ENCODE measurements at regions of chr6 and their contacts with region 1.

Region 1: GRCh38 chr6:133568970-133569889 is 319.7 kb upstream of the TCF21 start:
- DNase-seq: peak; percentile 26 to 55
- ATAC-seq: peak; percentile 94 to 97
- H3K4me3 ChIP-seq: peak overlapping the region; percentile 45 to 58 (median 52)
- H3K27ac ChIP-seq: peak overlapping the region; percentile 51 to 78 (median 72)
- H3K4me1 ChIP-seq: peaks cover 0 to 8% of the 10 kb centered on the region in 2 donors
- H3K27me3 ChIP-seq: no peaks in the 10 kb centered on the region
- CTCF ChIP-seq: peak; percentile 83 to 98 (median 93)
- POLR2A ChIP-seq: no peak

Region 2: DNA sequence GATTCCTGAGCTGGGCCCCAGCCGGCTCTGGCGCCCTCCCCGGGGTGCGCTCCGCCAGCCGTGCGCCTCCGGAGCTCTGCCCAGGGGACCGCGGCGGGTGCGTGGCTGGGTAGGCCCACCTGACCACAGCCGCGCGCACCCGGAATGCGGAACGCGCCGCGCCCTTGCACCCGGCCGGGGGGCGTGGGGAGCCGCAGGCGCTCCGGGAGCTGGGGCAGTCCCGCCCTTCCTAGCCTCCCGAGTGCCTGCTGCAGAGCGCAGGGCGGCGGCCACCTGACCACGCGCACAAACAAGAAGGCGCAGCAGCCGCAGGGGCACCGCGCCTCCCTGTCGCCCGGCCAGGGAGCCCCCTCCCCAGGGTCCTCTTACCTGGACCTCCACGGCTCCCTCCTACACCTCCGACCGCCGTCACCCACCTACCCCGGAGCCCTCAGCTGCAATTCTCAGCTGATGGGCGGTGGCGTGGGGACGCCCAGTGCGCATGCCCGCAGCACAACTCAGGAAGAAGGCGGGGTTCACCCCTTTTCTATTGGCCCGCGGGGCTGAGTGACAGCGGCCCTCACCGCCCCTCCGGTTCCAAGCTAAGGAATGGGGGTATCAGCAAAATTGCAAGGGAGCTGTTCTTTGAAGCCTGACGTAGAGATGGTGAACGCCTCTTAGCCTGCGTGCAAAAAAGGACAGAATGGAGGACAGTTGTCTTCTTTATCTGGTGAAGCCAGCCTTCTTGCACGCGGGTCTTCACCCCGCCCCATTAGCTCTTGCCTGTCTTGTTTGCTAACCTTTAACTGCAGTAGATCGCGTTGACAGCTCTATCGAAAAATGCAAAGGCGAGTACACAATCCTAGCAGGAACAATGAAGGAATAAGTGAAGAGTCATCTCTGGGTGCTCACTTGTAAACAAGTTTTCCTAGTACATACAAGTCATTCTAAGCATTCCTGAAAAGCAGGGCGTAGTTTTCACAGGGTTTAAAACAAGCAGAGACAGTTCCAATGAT is 1056.3 kb before region 1 on chr6 and contains the start of gene STX7:
- in situ Hi-C with region 1: loop called in 1 of 4 experiments (anchors 25 kb)
- intact Hi-C with region 1: loop called (anchors 10 kb)
- DNase-seq: peak; percentile 78 to 83
- ATAC-seq: peak; percentile 96
- H3K4me3 ChIP-seq: peak within 1 kb of the TSS; percentile 77 to 98 (median 88)
- H3K27ac ChIP-seq: peak within 1 kb of the TSS; percentile 85 to 96 (median 91)
- H3K4me1 ChIP-seq: peaks cover 15 to 21% of the 10 kb centered on the region in 2 donors
- H3K27me3 ChIP-seq: no peaks in the 10 kb centered on the region
- CTCF ChIP-seq: no peak
- POLR2A ChIP-seq: peak; percentile 73 to 79
- total RNA-seq, gene STX7: 18.2 to 64.3 (median 20.6) TPM

Region 3: DNA sequence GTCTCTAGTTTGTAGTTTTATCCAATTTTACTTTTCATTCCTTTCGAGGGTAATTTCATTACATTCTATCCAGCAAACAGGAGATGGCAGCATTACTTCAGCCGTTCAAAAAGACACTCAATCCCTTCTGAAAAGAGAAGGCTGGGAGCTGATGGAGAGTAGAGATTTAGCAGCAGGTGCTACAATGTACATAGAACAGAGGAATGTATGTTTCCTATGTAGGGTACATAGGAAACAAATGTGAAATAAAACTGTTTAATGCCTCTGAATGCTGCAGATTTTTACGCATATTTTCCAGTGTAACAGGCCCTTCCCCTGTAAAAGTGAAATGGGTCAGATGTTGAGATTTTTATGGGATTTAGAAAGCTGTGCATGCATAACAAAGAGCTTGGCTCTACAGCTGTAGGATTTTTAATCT is 738.9 kb before region 1 on chr6:
- in situ Hi-C with region 1: loop called in 1 of 4 experiments (anchors 25 kb)
- intact Hi-C with region 1: no loop called
- DNase-seq: no peak
- ATAC-seq: peak in 1 of 2 donors; percentile 80
- H3K4me3 ChIP-seq: no peak overlapping the region
- H3K27ac ChIP-seq: no peak overlapping the region
- H3K4me1 ChIP-seq: no peaks in the 10 kb centered on the region
- H3K27me3 ChIP-seq: no peaks in the 10 kb centered on the region
- CTCF ChIP-seq: peak in 1 of 5 experiments; percentile 34
- POLR2A ChIP-seq: no peak

Region 4: DNA sequence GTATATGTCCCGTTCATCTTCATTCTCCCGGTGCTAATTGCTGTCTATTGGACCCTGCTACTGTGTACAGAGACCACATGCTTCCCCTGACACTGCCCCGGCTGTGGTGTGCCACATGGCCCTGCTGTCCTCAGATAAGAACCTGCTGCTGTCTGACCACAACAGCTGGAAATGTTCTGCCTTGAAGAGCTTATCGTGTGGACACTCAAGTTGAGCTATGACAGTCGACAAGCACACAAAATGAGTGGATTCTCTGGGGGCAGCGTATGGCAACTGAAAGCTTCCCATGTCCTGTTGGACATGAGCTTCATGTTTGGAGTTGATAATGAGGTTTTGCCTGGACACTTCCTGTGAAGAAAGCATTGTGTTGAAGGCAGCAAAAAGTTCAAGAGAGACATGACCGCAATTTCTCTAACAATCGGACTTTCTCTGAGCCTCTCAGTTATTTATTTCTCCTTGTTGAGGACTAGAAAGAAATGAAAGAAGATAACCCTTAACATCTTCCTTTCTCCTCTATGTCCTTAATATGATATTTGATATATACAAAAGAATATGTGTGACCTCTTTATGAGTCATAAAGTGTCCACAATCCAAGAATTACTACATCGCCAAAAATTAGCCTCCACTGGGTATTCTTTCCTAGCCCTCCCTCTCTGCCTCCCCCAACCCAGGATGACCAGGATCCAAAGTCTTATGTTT is 132.6 kb after region 1 on chr6:
- in situ Hi-C with region 1: no loop called
- intact Hi-C with region 1: no loop called
- DNase-seq: no peak
- ATAC-seq: no peak
- H3K4me3 ChIP-seq: no peak overlapping the region
- H3K27ac ChIP-seq: peak overlapping the region in 1 of 4 donors; percentile 19
- H3K4me1 ChIP-seq: peaks cover 0 to 7% of the 10 kb centered on the region in 2 donors
- H3K27me3 ChIP-seq: no peaks in the 10 kb centered on the region
- CTCF ChIP-seq: no peak
- POLR2A ChIP-seq: no peak

Region 5: GRCh38 chr6:133804263-133804662 is 235.0 kb after region 1 on chr6:
- in situ Hi-C with region 1: no loop called
- intact Hi-C with region 1: no loop called
- DNase-seq: peak in 1 of 2 donors; percentile 22
- ATAC-seq: peak in 1 of 2 donors; percentile 53
- H3K4me3 ChIP-seq: no peak overlapping the region
- H3K27ac ChIP-seq: no peak overlapping the region
- H3K4me1 ChIP-seq: no peaks in the 10 kb centered on the region
- H3K27me3 ChIP-seq: no peaks in the 10 kb centered on the region
- CTCF ChIP-seq: no peak
- POLR2A ChIP-seq: no peak

Region 6: DNA sequence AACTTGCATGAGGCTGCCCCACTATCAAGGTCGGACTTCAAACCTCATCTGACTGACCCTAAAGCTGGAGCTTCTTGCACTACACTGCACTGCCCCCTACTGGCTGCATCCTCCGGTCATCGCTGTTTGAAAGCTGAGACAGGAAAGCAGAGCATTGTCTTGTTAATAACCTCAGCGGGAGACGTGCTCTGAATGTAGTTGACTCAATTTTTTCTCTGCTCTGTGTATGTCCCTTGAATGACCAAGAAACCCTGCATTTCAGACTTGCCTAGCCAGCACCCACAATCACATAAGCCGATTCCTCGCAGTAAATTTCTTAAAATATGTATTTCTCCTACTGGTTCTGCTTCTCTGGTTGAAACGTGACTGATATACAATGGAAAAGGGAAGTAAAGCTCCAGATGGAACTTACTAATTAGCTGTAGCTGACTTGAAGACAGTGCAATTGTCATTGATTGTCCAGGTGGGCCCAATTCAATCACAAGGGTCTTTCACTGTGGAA is 347.5 kb after region 1 on chr6:
- in situ Hi-C with region 1: loop called (anchors 5 kb)
- intact Hi-C with region 1: loop called (anchors 1 kb)
- DNase-seq: peak; percentile 60 to 72
- ATAC-seq: peak; percentile 78 to 81
- H3K4me3 ChIP-seq: no peak overlapping the region
- H3K27ac ChIP-seq: no peak overlapping the region
- H3K4me1 ChIP-seq: no peaks in the 10 kb centered on the region
- H3K27me3 ChIP-seq: no peaks in the 10 kb centered on the region
- CTCF ChIP-seq: peak; percentile 65 to 88 (median 79)
- POLR2A ChIP-seq: no peak

Region 7: DNA sequence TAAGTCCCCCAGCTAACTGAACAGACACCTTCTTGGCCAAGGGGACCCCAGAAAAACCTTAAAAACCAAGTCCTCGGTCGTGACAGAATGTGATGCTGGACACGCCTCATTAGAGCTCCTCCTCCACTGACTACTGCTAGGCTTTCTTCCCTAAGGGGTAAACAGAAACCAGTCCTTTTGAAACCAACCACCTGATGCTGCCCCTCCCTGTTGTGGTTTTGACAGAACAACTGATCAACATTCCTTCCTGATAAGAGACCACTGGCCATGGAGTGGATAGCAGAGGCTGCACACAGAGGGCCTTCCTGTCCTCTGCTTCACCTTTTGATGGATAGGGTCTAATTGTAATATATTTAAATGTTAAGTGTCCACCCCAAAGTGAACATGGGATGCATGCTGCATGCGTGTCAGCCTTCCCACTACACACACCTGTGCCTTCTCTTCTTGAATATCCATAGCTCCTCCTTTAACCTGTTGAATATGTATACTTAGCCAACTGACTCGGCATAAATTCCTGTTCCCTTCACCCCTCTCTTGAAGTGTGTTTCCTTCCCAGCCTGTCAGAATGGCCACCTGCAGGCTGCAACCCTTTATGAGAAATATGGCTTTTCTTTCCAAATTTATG is 511.1 kb after region 1 on chr6:
- in situ Hi-C with region 1: loop called in 1 of 4 experiments (anchors 10 kb)
- intact Hi-C with region 1: no loop called
- DNase-seq: no peak
- ATAC-seq: no peak
- H3K4me3 ChIP-seq: no peak overlapping the region
- H3K27ac ChIP-seq: no peak overlapping the region
- H3K4me1 ChIP-seq: no peaks in the 10 kb centered on the region
- H3K27me3 ChIP-seq: no peaks in the 10 kb centered on the region
- CTCF ChIP-seq: no peak
- POLR2A ChIP-seq: no peak

Measured in gastrocnemius medialis (tissue), 4 donors.